GM10248 (cell line): ENCODE measurements at regions of chr16 and their contacts with region 1.

Region 1: DNA sequence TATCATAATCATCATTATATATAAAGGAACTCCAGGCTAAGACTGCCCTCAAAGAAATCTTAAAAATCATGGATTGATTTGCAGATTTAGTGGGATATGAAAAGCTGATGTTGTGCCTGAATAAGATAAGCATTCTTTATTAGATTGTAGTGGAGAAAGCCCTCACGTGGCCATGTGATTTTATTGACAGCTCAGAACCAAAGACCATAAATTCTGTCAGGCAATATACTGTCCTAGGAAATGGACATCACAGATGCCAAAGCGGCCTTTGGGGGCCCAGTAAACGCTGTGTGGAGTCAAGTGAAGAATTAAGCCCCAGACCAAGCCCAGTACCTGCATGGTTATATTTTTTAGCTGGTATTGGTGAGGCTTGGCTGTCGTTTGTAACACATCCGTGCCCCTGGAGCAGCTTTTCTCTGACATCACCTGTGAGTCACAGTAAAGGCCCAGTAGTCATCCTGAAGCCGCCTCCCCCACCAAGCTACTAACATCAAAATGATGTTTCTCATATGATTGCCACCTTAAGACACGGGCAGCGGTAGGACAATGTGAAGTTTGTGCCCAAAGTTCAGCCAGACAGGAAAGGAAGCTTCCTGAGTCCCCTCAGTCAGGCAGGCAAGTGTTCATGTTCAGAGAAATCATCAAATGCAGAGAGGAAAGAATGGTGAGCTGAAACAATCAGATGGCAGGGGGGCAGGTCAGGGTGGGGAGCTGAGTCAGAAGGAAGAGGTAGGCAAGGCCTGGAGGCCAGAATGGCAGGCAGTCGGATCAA is 209.4 kb downstream of the IRX3 start:
- DNase-seq: no peak
- CTCF ChIP-seq: no peak

Region 2: GRCh38 chr16:54062361-54063278 is 14.6 kb before region 1 on chr16:
- CTCF ChIA-PET with region 1: interaction called, 13 read pairs
- POLR2A ChIA-PET with region 1: no interaction called
- DNase-seq: no peak
- CTCF ChIP-seq: no peak

Region 3: DNA sequence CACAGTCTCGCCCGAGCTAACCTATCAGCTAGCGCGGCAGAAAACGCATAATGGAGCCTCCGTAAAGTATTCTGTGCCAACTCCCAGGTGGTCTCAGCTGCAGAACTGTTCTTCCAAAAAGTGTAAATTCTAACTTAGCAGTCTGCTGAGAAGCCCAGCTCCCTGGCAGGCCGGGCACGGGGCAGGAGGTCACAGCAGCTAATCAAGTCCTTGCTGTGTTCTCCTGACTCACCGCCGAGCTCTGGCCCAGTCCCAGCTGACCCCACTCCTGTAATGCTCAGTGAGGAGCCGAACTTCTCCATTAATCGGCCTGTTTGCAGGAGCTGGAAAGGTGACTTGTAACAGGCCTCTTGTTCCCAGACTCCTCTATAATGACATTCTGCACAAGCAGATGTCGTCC is 16.0 kb after region 1 on chr16:
- CTCF ChIA-PET with region 1: no interaction called
- POLR2A ChIA-PET with region 1: no interaction called
- DNase-seq: no peak
- CTCF ChIP-seq: no peak